Right cardiac atrium (tissue), 5 donors: ENCODE measurements at regions of chrX and their contacts with region 1.

Region 1: DNA sequence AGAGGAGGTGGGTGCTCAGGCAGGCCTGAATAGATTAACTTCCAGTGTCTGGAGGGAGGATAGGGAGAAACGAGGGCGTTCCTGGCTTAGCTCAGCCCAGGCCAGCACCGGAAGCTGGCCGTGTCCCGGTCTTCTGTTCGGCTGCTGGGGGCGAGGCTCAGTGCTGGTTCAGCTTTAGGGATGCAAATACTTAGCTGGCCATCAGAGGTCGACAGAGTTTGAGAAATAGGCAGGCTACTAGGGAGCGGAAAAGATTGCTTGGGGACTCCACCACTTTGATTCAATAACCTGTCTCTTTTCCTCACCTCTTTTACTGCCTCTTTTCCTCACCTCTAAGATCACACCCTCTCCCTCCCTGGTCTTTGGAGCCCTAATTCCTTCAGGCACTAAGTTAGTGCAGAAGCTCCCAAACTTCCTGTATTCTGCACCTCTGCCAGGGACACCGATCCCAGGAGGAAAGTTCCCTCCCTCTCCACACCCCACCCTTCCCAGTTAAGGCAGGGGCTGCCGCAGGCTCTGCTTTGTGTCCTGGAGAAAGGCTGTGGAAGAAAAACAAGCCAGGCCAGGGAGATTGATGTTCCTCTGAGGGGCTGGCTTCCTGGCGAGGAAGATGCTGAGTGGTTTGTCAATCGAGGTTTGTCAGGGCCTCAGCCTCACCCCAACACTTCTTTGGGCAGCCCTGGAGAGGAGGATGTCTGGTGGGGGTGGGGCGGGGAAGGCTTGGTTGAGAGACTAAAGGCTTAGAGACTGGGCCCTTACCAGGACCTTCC is 6.0 kb upstream of the EFNB1 start:
- DNase-seq: peak; percentile 68 to 81 (median 77)
- ATAC-seq: peak; percentile 88 to 91
- H3K4me3 ChIP-seq: no peak overlapping the region
- H3K27ac ChIP-seq: no peak overlapping the region
- H3K4me1 ChIP-seq: no peaks in the 10 kb centered on the region
- H3K27me3 ChIP-seq: no peaks in the 10 kb centered on the region

Region 2: DNA sequence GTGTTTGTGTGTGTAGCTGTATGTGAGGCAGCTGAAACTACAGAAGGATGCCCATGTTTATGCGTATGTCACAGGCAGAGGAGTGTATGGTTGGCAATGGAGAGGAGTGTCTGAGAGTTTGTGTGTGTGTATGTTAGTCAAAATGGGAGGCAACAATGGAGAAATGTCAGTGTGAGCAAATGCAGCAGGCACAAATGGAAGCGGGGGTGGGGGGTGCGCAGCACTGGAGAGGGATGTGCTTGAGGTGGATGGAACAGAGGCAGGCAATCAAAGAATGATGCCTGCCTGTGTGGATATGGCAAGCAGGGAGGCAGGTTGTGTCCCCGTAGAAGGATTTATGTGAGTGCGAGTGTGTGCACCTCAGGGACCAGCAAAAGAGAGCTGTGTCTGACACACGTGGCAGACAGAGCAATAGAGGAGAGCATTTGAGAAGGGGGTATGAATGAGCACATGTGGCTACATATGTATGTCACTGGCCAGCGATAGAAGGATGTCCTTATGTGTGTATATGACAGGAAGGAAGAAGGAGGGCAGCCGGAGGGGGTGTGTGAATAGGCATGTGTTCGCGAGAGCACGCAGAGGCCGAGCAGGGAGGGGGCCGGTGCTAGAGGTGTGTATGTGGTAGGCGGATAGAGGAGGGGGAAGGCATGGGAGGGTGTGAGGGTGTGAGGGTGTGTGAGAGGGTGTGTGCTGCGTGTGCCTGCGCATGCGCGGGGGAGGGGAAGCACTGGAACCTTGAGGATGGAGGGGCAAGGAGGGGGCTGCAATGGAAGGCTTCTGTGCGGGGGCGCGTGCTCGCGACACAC is 341.3 kb after region 1 on chrX:
- intact Hi-C with region 1: loop called in 1 of 4 experiments (anchors 5 kb)
- DNase-seq: peak; percentile 26 to 74 (median 72)
- ATAC-seq: peak; percentile 80 to 82
- H3K4me3 ChIP-seq: peak overlapping the region; percentile 66
- H3K27ac ChIP-seq: no peak overlapping the region
- H3K4me1 ChIP-seq: no peaks in the 10 kb centered on the region
- H3K27me3 ChIP-seq: no peaks in the 10 kb centered on the region

Region 3: GRCh38 chrX:69222103-69223090 is 399.6 kb after region 1 on chrX:
- intact Hi-C with region 1: loop called in 3 of 4 experiments (anchors 2 to 5 kb)
- DNase-seq: peak; percentile 64 to 87 (median 86)
- ATAC-seq: peak; percentile 86 to 89
- H3K4me3 ChIP-seq: no peak overlapping the region
- H3K27ac ChIP-seq: no peak overlapping the region
- H3K4me1 ChIP-seq: no peaks in the 10 kb centered on the region
- H3K27me3 ChIP-seq: no peaks in the 10 kb centered on the region

Region 4: DNA sequence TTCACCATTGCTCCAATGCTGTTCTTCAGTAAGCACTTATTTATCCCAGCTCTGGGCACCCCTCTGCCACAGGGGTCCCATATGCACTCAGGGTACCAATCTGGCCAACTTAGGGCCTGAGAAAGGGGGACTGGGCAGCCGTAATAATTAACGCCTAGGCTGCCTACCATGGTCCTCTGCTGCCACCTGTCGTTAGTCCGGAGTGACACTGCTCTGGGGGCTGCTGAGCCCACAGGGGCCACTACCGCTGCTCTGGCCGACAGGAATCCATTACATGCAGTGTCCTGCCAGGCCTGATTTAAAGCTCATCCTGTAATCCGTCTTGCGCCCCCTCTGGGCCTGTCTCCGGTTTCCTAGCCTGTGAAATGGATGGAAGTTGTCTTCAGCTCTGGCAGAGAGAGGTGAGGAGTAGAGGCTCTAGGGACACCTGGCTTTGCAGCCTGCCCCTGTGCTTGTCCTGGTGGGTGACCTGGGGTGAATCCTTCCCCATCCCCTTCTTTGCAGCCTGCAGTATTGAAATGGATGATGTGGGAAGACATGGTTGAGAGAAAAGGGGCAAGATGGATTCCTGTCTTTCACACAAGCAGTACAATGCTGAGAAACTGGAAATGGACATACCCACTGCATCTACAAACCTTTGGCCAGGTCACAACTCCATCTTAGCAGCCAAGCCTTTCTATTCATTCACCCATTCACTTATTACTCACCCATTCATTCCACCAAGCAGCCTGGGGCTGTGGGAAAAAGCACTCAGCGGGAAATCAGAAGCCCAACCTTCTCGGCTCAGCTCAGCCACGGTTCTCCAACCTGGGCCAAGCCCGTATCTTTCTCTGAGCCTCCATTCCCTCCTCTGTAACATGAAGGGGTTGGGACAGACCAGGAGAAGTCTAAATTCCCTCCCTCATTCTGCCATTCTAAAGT is 565.0 kb after region 1 on chrX:
- intact Hi-C with region 1: loop called in 3 of 4 experiments (anchors 5 kb)
- DNase-seq: peak; percentile 49 to 73 (median 71)
- ATAC-seq: peak; percentile 72 to 81
- H3K4me3 ChIP-seq: no peak overlapping the region
- H3K27ac ChIP-seq: no peak overlapping the region
- H3K4me1 ChIP-seq: no peaks in the 10 kb centered on the region
- H3K27me3 ChIP-seq: no peaks in the 10 kb centered on the region